Activated CD4-positive, alpha-beta T cell treated with anti-CD3 and anti-CD28 coated beads for 36 hours (primary cell): ENCODE measurements at regions of chr7 and their contacts with region 1.

Region 1: GRCh38 chr7:13262929-13263530 is 575.6 kb downstream of the ARL4A start:
- DNase-seq: no peak
- ATAC-seq: no peak
- H3K4me3 Mint-ChIP-seq: no peak overlapping the region
- H3K27ac Mint-ChIP-seq: no peak overlapping the region
- H3K4me1 Mint-ChIP-seq: no peaks in the 10 kb centered on the region
- H3K27me3 Mint-ChIP-seq: peaks cover 7% of the 10 kb centered on the region

Region 2: DNA sequence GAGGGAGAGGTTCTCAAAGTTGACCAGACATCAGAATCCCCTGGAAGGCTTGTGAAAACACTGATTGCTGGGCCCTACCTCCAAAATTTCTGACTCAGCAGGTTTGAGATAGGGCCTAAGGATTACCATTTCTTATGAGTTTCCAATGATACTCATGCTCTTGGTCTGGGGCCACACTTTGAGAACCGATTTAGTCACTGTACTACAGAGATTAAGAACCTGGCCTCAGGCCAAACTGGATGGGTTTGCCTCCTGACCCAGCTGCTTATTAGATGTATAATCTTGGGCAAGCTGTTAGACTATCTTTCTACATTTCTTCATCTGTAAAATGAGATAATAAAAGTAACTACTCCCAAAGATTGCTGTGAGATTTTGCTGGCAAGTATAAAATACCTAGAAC is 769.6 kb before region 1 on chr7:
- CTCF ChIA-PET with region 1: no interaction called
- POLR2A ChIA-PET with region 1: no interaction called
- intact Hi-C with region 1: no loop called
- DNase-seq: no peak
- ATAC-seq: no peak
- H3K4me3 Mint-ChIP-seq: no peak overlapping the region
- H3K27ac Mint-ChIP-seq: no peak overlapping the region
- H3K4me1 Mint-ChIP-seq: no peaks in the 10 kb centered on the region
- H3K27me3 Mint-ChIP-seq: no peaks in the 10 kb centered on the region

Region 3: GRCh38 chr7:12638851-12639467 is 624.1 kb before region 1 on chr7:
- CTCF ChIA-PET with region 1: interaction called, 8 read pairs
- POLR2A ChIA-PET with region 1: no interaction called
- intact Hi-C with region 1: loop called (anchors 1 kb)
- DNase-seq: no peak
- ATAC-seq: peak; percentile 50
- H3K4me3 Mint-ChIP-seq: no peak overlapping the region
- H3K27ac Mint-ChIP-seq: no peak overlapping the region
- H3K4me1 Mint-ChIP-seq: peaks cover 21% of the 10 kb centered on the region
- H3K27me3 Mint-ChIP-seq: no peaks in the 10 kb centered on the region

Region 4: DNA sequence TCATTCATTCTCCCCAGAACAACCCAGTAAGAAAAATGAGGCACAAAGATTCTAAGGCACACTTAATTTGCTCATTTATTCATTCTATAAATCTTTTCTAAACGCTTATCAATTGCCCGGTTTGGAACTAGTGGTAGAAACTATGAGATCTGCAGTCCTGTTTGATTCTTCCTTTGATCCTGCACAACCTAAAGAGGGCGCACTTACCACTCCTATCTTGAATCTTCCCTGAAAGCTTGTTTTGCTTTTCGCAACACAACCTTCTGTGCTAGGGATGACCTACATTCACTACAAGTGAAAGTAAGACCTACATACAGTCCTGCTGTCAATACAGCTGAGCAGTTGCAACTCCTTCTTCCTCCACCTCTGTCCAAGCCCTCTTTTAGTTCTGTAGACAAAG is 588.2 kb before region 1 on chr7:
- CTCF ChIA-PET with region 1: interaction called, 3 read pairs
- POLR2A ChIA-PET with region 1: no interaction called
- intact Hi-C with region 1: loop called in 1 of 2 experiments (anchors 1 kb)
- DNase-seq: peak; percentile 49
- ATAC-seq: peak; percentile 73
- H3K4me3 Mint-ChIP-seq: no peak overlapping the region
- H3K27ac Mint-ChIP-seq: no peak overlapping the region
- H3K4me1 Mint-ChIP-seq: peaks cover 3% of the 10 kb centered on the region
- H3K27me3 Mint-ChIP-seq: no peaks in the 10 kb centered on the region

Region 5: GRCh38 chr7:13288516-13288915 is 25.5 kb after region 1 on chr7:
- CTCF ChIA-PET with region 1: no interaction called
- POLR2A ChIA-PET with region 1: no interaction called
- intact Hi-C with region 1: no loop called
- DNase-seq: no peak
- ATAC-seq: no peak
- H3K4me3 Mint-ChIP-seq: no peak overlapping the region
- H3K27ac Mint-ChIP-seq: no peak overlapping the region
- H3K4me1 Mint-ChIP-seq: no peaks in the 10 kb centered on the region
- H3K27me3 Mint-ChIP-seq: no peaks in the 10 kb centered on the region

Region 6: GRCh38 chr7:13989126-13989948 is 726.3 kb after region 1 on chr7 and contains the start of gene ETV1:
- CTCF ChIA-PET with region 1: no interaction called
- POLR2A ChIA-PET with region 1: no interaction called
- intact Hi-C with region 1: no loop called
- DNase-seq: peak; percentile 9
- ATAC-seq: no peak
- H3K4me3 Mint-ChIP-seq: no peak within 1 kb of the TSS
- H3K27ac Mint-ChIP-seq: no peak within 1 kb of the TSS
- H3K4me1 Mint-ChIP-seq: no peaks in the 10 kb centered on the region
- H3K27me3 Mint-ChIP-seq: no peaks in the 10 kb centered on the region
- total RNA-seq, gene ETV1: 0.32 to 0.37 TPM